ENCODE measurements at regions of chr16 and their contacts with region 1.

Region 1: GRCh38 chr16:16127469-16128116 is 95.7 kb downstream of the ABCC6 start:
- DNase-seq: peak; percentile 63 to 68 (median 66)
- H3K4me3 ChIP-seq: no peak overlapping the region
- H3K4me3 Mint-ChIP-seq: no peak overlapping the region
- H3K27ac ChIP-seq: no peak overlapping the region
- H3K27ac Mint-ChIP-seq: peak overlapping the region in 6 of 7 donors; percentile 17 to 88 (median 60)
- H3K4me1 ChIP-seq: no peaks in the 10 kb centered on the region
- H3K4me1 Mint-ChIP-seq: peaks cover 0 to 12% (median 5%) of the 10 kb centered on the region in 4 donors
- H3K27me3 ChIP-seq: no peaks in the 10 kb centered on the region
- H3K27me3 Mint-ChIP-seq: no peaks in the 10 kb centered on the region

Region 2: GRCh38 chr16:15427648-15428239 is 699.8 kb before region 1 on chr16:
- CTCF ChIA-PET with region 1: no interaction called
- POLR2A ChIA-PET with region 1: no interaction called
- intact Hi-C with region 1: loop called (anchors 1 kb)
- DNase-seq: peak; percentile 27 to 53 (median 40)
- H3K4me3 ChIP-seq: no peak overlapping the region
- H3K4me3 Mint-ChIP-seq: no peak overlapping the region
- H3K27ac ChIP-seq: no peak overlapping the region
- H3K27ac Mint-ChIP-seq: peak overlapping the region in 1 of 7 donors; percentile 56
- H3K4me1 ChIP-seq: no peaks in the 10 kb centered on the region
- H3K4me1 Mint-ChIP-seq: peaks cover 0 to 3% (median under 1%) of the 10 kb centered on the region in 4 donors
- H3K27me3 ChIP-seq: no peaks in the 10 kb centered on the region
- H3K27me3 Mint-ChIP-seq: peaks cover 6 to 7% of the 10 kb centered on the region in 2 donors

Region 3: DNA sequence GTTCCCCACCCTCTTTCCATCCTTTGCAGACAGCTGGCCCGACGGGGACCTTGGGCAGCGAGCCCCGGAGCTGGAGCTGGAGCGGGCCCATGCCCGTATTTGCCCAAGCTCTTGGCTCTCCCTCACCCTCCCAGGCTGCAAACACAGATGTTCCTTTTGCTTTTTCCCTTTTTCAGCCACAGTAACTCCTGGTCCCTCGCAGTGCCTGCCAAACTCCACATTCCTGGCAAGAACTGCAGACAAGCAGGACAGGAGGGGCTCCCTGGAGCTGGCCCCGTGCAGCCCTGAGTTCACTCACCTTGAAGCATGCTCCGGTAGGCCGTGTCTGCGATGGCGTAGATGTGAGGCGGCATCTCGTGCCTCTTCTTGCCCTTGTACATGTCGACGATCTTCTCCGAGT is 304.6 kb before region 1 on chr16:
- CTCF ChIA-PET with region 1: interaction called, 4 read pairs
- POLR2A ChIA-PET with region 1: no interaction called
- intact Hi-C with region 1: loop called (anchors 2 kb)
- DNase-seq: no peak
- H3K4me3 ChIP-seq: no peak overlapping the region
- H3K4me3 Mint-ChIP-seq: peak overlapping the region in 1 of 8 donors; percentile 12
- H3K27ac ChIP-seq: no peak overlapping the region
- H3K27ac Mint-ChIP-seq: no peak overlapping the region
- H3K4me1 ChIP-seq: no peaks in the 10 kb centered on the region
- H3K4me1 Mint-ChIP-seq: no peaks in the 10 kb centered on the region
- H3K27me3 ChIP-seq: no peaks in the 10 kb centered on the region
- H3K27me3 Mint-ChIP-seq: peaks cover 2 to 3% of the 10 kb centered on the region in 2 donors

Region 4: DNA sequence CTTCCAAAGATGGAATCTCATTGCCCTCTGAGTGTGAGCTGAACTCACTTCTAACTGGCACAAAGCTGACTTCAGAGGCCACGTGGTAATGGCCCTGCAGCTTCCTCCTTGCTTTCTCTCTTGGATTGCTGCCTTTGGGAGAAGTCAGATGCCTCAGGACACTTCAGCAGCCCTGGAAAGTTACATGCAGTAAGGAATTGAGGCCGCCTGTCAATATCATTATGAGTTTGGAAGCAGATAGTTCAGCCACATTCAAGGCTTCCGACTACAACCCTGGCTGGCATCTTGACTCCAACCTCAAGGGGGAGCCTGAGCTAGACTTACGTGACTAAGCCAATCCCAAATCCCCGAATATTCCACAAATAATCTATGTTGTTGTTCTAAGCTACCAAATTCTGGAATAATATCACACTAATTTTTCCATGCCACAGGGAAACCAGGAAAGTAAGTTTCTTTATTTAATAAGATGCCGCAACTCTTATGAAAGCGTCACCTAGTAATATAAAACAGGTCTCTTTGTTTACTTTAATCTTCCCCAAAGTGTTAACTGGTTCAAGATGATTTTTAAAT is 252.8 kb before region 1 on chr16:
- CTCF ChIA-PET with region 1: interaction called, 10 read pairs
- POLR2A ChIA-PET with region 1: no interaction called
- intact Hi-C with region 1: no loop called
- DNase-seq: peak in 1 of 5 donors; percentile 3
- H3K4me3 ChIP-seq: no peak overlapping the region
- H3K4me3 Mint-ChIP-seq: no peak overlapping the region
- H3K27ac ChIP-seq: no peak overlapping the region
- H3K27ac Mint-ChIP-seq: peak overlapping the region in 4 of 7 donors; percentile 35 to 82 (median 44)
- H3K4me1 ChIP-seq: no peaks in the 10 kb centered on the region
- H3K4me1 Mint-ChIP-seq: peaks cover 0 to 4% (median 4%) of the 10 kb centered on the region in 4 donors
- H3K27me3 ChIP-seq: no peaks in the 10 kb centered on the region
- H3K27me3 Mint-ChIP-seq: no peaks in the 10 kb centered on the region

Region 5: GRCh38 chr16:15949210-15950160 is 178.1 kb before region 1 on chr16 and contains the start of gene ABCC1:
- CTCF ChIA-PET with region 1: interaction called, 4 read pairs
- POLR2A ChIA-PET with region 1: interaction called, 4 read pairs
- intact Hi-C with region 1: loop called (anchors 1 kb)
- DNase-seq: peak; percentile 49 to 78 (median 61)
- H3K4me3 ChIP-seq: peak within 1 kb of the TSS; percentile 76 to 92
- H3K4me3 Mint-ChIP-seq: peak within 1 kb of the TSS; percentile 94 to 98 (median 97)
- H3K27ac ChIP-seq: peak within 1 kb of the TSS; percentile 83
- H3K27ac Mint-ChIP-seq: peak within 1 kb of the TSS; percentile 94 to 100 (median 99)
- H3K4me1 ChIP-seq: peaks cover 46% of the 10 kb centered on the region
- H3K4me1 Mint-ChIP-seq: peaks cover 21 to 53% (median 39%) of the 10 kb centered on the region in 4 donors
- H3K27me3 ChIP-seq: no peaks in the 10 kb centered on the region
- H3K27me3 Mint-ChIP-seq: no peaks in the 10 kb centered on the region
- total RNA-seq, gene ABCC1: 57.3 to 69.9 TPM